ENCODE measurements at regions of chr16 and their contacts with region 1.

Region 1: DNA sequence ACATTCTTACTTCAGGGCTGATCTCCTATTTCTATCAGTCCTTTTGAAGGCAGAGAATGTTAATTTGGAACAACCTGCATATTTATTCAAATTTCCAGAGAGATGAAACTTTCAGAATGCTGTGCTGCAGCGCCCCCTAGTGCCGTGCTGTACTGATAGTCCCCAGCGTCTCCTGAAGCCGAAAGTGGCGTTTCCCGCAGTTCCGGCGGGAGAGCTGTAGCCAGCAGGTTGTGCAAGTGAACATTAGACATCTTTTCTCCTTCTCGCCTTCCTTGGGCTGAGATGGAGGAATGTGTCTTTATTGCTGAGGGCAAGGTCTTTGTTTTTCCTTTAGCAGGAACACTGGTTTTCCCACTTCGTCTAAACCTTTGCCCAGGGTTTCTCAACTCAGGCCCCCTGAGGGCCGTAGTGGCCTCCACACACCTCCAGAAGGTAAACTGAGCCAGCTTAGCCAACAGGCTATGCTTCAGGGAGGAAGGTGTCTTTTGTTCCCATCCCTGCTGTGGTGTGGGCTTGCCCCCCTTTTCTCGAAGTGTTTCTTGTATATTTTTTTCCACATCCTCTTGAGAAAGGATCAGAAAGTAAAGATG is 26.4 kb downstream of the USP10 start:
- DNase-seq: peak; percentile 88
- ATAC-seq: peak; percentile 75
- H3K4me3 Mint-ChIP-seq: peak overlapping the region; percentile 37
- H3K27ac Mint-ChIP-seq: no peak overlapping the region
- H3K4me1 Mint-ChIP-seq: peaks cover 73% of the 10 kb centered on the region
- H3K27me3 Mint-ChIP-seq: no peaks in the 10 kb centered on the region

Region 2: GRCh38 chr16:84504420-84505248 is 221.5 kb before region 1 on chr16 and contains the start of gene MEAK7:
- CTCF ChIA-PET with region 1: interaction called, 16 read pairs
- POLR2A ChIA-PET with region 1: no interaction called
- DNase-seq: peak; percentile 98
- ATAC-seq: peak; percentile 94
- H3K4me3 Mint-ChIP-seq: peak within 1 kb of the TSS; percentile 82
- H3K27ac Mint-ChIP-seq: peak within 1 kb of the TSS; percentile 86
- H3K4me1 Mint-ChIP-seq: peaks cover 56% of the 10 kb centered on the region
- H3K27me3 Mint-ChIP-seq: no peaks in the 10 kb centered on the region
- total RNA-seq, gene MEAK7: 62.3 to 72.4 TPM

Region 3: GRCh38 chr16:84599521-84600202 is 126.5 kb before region 1 on chr16:
- CTCF ChIA-PET with region 1: interaction called, 14 read pairs
- POLR2A ChIA-PET with region 1: no interaction called
- DNase-seq: peak; percentile 63
- ATAC-seq: peak; percentile 21
- H3K4me3 Mint-ChIP-seq: peak overlapping the region; percentile 73
- H3K27ac Mint-ChIP-seq: peak overlapping the region; percentile 96
- H3K4me1 Mint-ChIP-seq: peaks cover 90% of the 10 kb centered on the region
- H3K27me3 Mint-ChIP-seq: no peaks in the 10 kb centered on the region

Region 4: DNA sequence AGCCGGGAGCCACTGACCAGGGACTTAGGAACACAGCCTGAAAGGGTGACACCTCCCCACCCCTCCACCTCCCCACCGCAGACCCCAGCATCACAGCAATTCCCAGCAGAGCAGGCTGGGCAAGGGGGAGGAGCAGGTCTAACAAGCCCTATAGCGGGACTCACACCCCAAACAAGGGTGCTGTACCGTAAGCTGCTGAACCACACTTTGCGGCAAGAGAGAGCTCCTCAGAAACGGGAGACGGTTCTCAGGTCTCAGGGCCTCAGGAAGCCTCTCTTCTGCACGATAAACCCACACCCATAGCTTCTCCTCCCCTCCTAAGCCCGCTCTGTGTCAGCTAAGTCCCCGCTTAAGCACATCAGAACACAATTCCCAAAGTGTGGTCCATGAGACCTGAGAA is 96.6 kb before region 1 on chr16:
- CTCF ChIA-PET with region 1: interaction called, 100 read pairs
- POLR2A ChIA-PET with region 1: no interaction called
- DNase-seq: no peak
- ATAC-seq: peak; percentile 28
- H3K4me3 Mint-ChIP-seq: no peak overlapping the region
- H3K27ac Mint-ChIP-seq: no peak overlapping the region
- H3K4me1 Mint-ChIP-seq: peaks cover 27% of the 10 kb centered on the region
- H3K27me3 Mint-ChIP-seq: peaks cover 33% of the 10 kb centered on the region

Region 5: DNA sequence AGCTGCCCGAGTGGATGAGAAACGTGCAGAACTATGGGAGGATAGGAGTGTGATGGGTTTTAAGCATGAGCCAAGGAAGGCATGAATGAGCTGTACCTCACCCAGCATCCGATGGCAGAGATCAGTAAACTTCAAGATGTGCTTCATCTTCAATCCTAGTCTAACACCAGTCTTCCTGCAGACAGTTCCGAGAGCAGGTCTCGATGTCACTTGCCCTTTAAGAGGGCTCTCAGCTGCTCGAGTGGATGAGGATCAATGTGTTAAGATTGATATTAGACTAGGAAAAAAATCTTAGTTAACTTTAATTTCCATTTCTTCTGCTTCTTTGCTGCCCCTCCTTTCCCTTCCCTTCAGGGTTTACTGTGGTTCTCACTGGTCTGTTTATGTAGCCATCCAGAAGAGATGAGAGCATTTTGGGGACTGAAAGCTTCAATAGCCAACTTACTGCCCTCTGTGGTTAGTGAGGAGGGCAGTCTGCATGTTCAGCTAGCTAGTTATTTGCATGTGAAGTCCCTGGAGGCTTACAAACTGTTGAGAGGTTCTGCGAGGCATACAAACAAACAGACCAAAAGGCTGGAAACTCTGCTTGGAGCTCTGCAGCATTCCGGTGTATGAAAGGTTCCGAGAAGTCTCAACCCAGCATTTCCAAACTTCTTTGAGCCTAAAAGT is 62.6 kb before region 1 on chr16:
- CTCF ChIA-PET with region 1: interaction called, 42 read pairs
- POLR2A ChIA-PET with region 1: interaction called, 3 read pairs
- DNase-seq: no peak
- ATAC-seq: no peak
- H3K4me3 Mint-ChIP-seq: no peak overlapping the region
- H3K27ac Mint-ChIP-seq: no peak overlapping the region
- H3K4me1 Mint-ChIP-seq: peaks cover 19% of the 10 kb centered on the region
- H3K27me3 Mint-ChIP-seq: no peaks in the 10 kb centered on the region

Region 6: DNA sequence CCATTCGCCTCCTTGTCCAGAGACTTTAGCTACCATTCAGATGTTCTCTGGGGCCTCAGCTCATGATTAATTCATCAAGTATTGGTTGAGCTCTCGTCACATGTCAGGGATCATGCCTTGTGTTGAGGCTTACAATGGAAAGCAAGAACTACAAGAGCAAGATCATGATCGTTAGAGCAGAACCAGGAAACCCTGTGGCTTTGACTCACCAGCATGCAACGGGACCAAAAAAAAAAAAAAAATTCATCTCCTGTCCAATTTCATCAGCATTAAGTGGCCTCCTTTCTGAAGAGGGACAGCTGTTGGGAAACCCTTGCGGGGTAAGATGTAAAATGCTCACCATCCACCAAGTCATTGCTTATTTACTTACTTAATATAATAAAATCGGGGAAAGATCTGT is 38.5 kb before region 1 on chr16:
- CTCF ChIA-PET with region 1: interaction called, 26 read pairs
- POLR2A ChIA-PET with region 1: no interaction called
- DNase-seq: no peak
- ATAC-seq: peak; percentile 27
- H3K4me3 Mint-ChIP-seq: no peak overlapping the region
- H3K27ac Mint-ChIP-seq: no peak overlapping the region
- H3K4me1 Mint-ChIP-seq: peaks cover 16% of the 10 kb centered on the region
- H3K27me3 Mint-ChIP-seq: peaks cover 17% of the 10 kb centered on the region

Region 7: DNA sequence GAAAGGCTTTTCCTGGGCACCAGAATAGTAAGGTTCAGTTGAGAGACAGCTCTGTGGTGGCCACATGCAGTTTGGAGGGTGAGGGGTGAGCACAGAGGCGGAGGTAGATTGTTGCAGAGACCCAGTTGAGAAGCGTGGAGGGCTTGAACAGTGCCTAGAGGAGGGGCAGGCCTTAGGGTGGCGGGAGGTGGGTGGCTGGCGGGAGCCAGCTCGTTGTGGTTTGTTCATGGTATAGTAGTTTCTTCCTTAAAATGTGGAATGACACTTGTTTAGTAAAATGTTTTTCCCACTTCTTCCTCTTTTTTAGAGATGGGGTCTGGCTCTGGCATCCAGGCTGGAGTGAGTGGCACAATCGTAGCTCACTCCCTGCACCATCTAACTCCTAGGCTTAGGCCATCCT is 12.1 kb before region 1 on chr16:
- CTCF ChIA-PET with region 1: interaction called, 52 read pairs
- POLR2A ChIA-PET with region 1: no interaction called
- DNase-seq: no peak
- ATAC-seq: no peak
- H3K4me3 Mint-ChIP-seq: no peak overlapping the region
- H3K27ac Mint-ChIP-seq: no peak overlapping the region
- H3K4me1 Mint-ChIP-seq: peaks cover 24% of the 10 kb centered on the region
- H3K27me3 Mint-ChIP-seq: no peaks in the 10 kb centered on the region

Region 8: DNA sequence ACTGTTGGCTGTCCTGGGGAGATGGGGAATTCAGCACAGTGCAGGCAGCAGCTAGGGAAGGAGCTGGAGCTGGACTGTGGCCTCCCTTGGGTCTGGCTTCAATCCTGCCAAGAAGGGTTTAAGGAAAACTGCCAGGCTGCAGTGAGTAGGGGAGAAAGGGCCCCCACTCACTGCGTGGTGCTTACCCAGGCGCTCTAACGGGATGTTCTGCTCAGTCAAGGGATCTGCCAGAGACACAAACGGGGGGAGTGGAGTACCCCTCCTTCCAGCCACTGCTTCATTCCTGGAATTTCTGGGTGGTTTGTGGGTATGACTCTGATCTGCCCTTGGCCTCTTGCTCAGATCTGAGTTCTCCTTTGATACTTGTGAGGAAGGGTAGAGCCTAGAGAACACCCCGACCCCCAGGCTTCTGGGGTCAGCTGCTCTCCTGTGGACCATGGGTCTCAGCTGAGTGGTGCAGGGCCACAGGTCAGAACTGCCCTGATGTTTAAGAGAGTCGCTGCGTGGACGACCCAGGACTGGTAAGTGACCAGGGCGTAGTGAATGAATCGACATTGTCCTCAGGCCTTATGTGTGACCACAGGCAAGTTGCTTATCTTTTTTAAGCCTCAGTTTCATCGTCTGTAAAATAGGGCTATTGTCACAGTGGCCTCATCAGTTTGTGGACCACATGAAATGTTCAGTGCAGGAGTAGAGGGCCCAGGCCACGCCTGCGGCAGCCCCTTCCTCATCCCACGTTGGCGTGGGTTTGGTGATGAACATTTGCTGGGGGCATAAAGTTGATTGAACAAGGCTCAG is 103.2 kb after region 1 on chr16:
- CTCF ChIA-PET with region 1: no interaction called
- POLR2A ChIA-PET with region 1: no interaction called
- DNase-seq: no peak
- ATAC-seq: no peak
- H3K4me3 Mint-ChIP-seq: no peak overlapping the region
- H3K27ac Mint-ChIP-seq: no peak overlapping the region
- H3K4me1 Mint-ChIP-seq: no peaks in the 10 kb centered on the region
- H3K27me3 Mint-ChIP-seq: peaks cover 7% of the 10 kb centered on the region